IMR-90 (cell line): ENCODE measurements at regions of chr7 and their contacts with region 1.

Region 1: DNA sequence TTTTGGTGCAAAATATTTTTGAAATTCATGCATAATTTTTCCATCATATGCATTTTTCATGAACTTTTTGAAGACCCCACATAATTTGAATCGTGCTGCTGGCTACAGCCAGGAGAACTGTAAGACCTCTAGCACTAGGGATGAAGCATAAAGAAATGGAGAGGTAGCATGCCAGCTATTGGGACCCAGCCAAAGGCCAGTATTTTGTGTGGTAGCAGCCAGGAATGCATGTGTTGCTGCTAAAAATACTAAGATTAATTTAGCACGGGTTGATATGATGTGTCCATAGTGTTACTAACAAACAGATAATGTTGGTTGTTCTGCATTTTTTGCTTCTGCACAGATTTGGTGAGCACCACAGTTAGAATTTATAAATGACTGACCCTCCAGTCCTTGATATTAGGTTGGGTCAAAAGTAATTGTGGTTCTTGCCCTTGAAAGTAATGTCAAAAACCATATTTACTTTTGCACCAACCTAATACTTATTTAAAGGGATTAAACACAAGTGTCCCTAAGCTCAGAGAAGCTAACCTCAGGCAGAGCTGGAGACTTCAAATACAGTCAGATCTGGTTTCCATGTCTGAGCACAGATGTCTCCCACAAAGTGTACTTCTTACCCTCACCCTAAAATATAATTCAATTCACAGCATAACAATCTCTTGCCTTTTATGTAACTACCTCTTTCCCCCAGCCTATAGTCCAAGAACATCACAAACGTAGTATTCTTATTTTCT is 54.1 kb upstream of the NPSR1 start:
- DNase-seq: no peak
- ATAC-seq: no peak
- H3K4me3 ChIP-seq: no peak overlapping the region
- H3K27ac ChIP-seq: no peak overlapping the region
- H3K4me1 ChIP-seq: no peaks in the 10 kb centered on the region
- H3K27me3 ChIP-seq: no peaks in the 10 kb centered on the region
- CTCF ChIP-seq: no peak
- POLR2A ChIP-seq: no peak
- RAD21 ChIP-seq: no peak

Region 2: DNA sequence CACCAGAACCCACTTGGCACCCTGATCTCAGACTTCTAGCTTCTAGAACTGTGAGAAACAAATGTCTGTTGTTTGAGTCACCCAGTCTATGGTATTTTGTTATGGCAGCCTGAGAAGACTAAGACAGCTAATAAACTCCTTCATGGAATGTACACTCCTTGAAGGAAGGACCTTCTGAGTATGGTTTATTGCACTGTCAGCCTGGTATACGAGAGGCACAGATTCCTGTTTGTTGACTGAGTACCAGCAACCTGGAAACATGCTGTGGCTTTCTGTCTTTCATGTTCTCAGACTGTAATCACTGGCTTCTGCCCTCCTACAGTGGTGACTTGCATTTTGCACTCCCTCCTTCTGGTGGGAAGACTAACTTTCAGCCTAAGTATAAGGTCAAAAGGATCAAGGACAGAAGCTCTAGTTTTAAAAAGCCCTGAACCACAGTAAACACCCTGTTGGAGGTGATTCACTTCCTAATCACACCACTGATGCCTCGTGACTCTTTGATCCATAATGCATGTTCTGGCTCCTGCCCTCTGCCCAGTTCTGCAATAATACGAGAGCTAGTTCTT is 264.8 kb before region 1 on chr7:
- CTCF ChIA-PET with region 1: no interaction called
- POLR2A ChIA-PET with region 1: no interaction called
- dilution Hi-C with region 1: no loop called
- in situ Hi-C with region 1: no loop called
- intact Hi-C with region 1: loop called (anchors 10 kb)
- DNase-seq: no peak
- ATAC-seq: no peak; the same call in 1 of the 2 replicates
- H3K4me3 ChIP-seq: no peak overlapping the region
- H3K27ac ChIP-seq: no peak overlapping the region
- H3K4me1 ChIP-seq: no peaks in the 10 kb centered on the region; the same call in 1 of the 2 replicates
- H3K27me3 ChIP-seq: no peaks in the 10 kb centered on the region; the same call in 1 of the 2 replicates
- CTCF ChIP-seq: no peak
- POLR2A ChIP-seq: no peak
- RAD21 ChIP-seq: no peak